Left lung (tissue), 14 donors: ENCODE measurements at regions of chr4 and their contacts with region 1.

Region 1: GRCh38 chr4:147020456-147020855 is 74.8 kb upstream of the TTC29 start:
- DNase-seq: no peak
- ATAC-seq: no peak
- H3K4me3 ChIP-seq: no peak overlapping the region
- H3K27ac ChIP-seq: no peak overlapping the region
- H3K4me1 ChIP-seq: no peaks in the 10 kb centered on the region
- H3K27me3 ChIP-seq: no peaks in the 10 kb centered on the region
- CTCF ChIP-seq: no peak

Region 2: GRCh38 chr4:146486565-146486964 is 533.9 kb before region 1 on chr4:
- intact Hi-C with region 1: no loop called
- DNase-seq: no peak
- ATAC-seq: no peak
- H3K4me3 ChIP-seq: no peak overlapping the region
- H3K27ac ChIP-seq: no peak overlapping the region
- H3K4me1 ChIP-seq: peaks cover 0 to 7% of the 10 kb centered on the region in 2 donors
- H3K27me3 ChIP-seq: no peaks in the 10 kb centered on the region
- CTCF ChIP-seq: no peak

Region 3: GRCh38 chr4:147096667-147097604 is 76.5 kb after region 1 on chr4:
- intact Hi-C with region 1: loop called in 1 of 2 experiments (anchors 5 kb)
- DNase-seq: peak in 1 of 4 donors; percentile 65
- ATAC-seq: peak; percentile 82
- H3K4me3 ChIP-seq: no peak overlapping the region
- H3K27ac ChIP-seq: no peak overlapping the region
- H3K4me1 ChIP-seq: peaks cover 0 to 3% of the 10 kb centered on the region in 2 donors
- H3K27me3 ChIP-seq: no peaks in the 10 kb centered on the region
- CTCF ChIP-seq: peak; percentile 66